HEK293 (cell line): ENCODE measurements at regions of chr9 and their contacts with region 1.

Region 1: DNA sequence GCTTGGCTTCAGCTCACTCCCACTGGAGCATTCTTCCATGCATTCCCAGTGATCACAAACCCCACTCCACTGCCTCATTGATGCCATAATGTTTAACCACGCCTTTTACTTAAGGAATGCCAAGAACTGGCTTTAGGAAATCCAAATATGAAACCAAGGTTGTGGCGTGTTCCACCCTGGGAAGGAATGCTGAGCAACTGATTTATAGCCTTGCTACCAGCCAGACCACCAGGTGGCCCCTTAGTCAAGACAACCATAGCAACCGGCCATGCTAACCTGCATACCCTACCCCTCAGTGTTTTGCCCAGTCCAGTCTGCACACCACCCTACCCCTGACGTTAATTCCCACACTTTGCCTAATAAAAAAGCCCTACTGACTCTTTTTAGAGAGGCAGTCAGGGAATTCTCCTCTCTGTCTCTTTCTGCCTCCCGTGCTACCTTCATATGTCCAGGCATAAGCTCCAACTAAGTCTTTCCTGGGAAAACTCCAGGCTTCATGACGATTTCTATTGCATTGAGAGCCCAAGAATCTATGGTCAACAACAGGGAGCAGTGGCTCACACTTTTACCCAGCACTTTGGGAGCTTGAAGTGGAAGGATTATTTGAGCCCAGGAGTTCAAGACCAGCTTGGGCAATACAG is 27.0 kb upstream of the PRRC2B start:
- H3K4me3 ChIP-seq: no peak overlapping the region
- H3K27ac ChIP-seq: no peak overlapping the region
- H3K4me1 ChIP-seq: 0 out of 2 replicates have a peak, but pooled peaks cover 2% of the 10 kb centered on the region
- CTCF ChIP-seq: peak; percentile 75

Region 2: GRCh38 chr9:131258698-131259431 is 108.0 kb before region 1 on chr9:
- CTCF ChIA-PET with region 1: no interaction called
- POLR2A ChIA-PET with region 1: no interaction called
- H3K4me3 ChIP-seq: no peak overlapping the region
- H3K27ac ChIP-seq: no peak overlapping the region
- H3K4me1 ChIP-seq: no peaks in the 10 kb centered on the region
- CTCF ChIP-seq: no peak

Region 3: DNA sequence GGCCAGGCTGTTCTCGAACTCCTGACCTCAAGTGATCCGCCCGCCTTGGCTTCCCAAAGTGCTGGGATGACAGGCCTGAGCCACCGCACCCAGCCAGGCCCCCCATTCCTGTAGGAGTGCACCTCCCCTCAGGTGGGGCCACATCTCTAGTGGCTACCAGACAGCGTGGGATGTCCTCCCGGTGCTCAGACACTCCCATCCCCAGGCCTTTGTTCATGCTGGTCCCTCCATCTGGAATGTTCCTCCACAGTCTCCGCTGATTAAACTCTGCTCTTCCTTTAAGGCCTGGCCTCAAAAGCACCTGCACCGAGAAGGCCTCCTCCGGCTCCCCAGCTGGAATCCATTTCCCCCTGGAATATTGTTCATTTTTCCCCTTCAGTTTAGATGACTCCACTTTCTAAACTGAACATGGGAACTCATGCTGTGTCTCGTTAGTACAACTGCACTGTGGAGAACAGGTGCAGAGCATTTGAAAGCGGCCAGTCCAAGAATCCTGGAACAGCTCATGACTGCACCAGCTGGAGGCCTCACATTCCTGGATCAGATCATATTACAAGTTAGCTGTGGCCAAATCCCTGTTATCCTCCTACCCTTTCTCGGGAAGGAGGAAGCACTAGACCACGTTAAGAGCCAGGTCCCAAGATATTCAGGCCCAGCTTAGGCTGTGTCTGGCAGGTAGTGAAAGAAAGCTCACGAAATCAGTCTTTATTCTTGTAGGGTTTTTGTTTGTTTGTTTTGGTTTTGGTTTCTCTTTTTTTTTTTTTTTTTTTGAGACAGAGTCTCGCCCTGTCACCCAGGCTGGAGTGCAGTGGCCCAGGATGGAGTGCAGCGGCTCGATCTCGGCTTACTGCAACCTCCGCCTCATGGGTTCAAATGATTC is 16.2 kb after region 1 on chr9:
- CTCF ChIA-PET with region 1: interaction called, 22 read pairs
- POLR2A ChIA-PET with region 1: interaction called, 4 read pairs
- H3K4me3 ChIP-seq: no peak overlapping the region
- H3K27ac ChIP-seq: peak overlapping the region; percentile 44; the same call in 1 of the 2 replicates
- H3K4me1 ChIP-seq: peaks cover 3% of the 10 kb centered on the region; the same call in 1 of the 2 replicates
- CTCF ChIP-seq: no peak

Region 4: GRCh38 chr9:131393622-131394463 is 27.0 kb after region 1 on chr9 and contains the start of gene PRRC2B:
- CTCF ChIA-PET with region 1: interaction called, 5 read pairs
- POLR2A ChIA-PET with region 1: interaction called, 39 read pairs
- H3K4me3 ChIP-seq: peak within 1 kb of the TSS; percentile 68
- H3K27ac ChIP-seq: peak within 1 kb of the TSS; percentile 99
- H3K4me1 ChIP-seq: peaks cover 17% of the 10 kb centered on the region
- CTCF ChIP-seq: no peak

Region 5: GRCh38 chr9:131407717-131408195 is 40.9 kb after region 1 on chr9:
- CTCF ChIA-PET with region 1: interaction called, 15 read pairs
- POLR2A ChIA-PET with region 1: interaction called, 4 read pairs
- H3K4me3 ChIP-seq: no peak overlapping the region
- H3K27ac ChIP-seq: peak overlapping the region; percentile 47
- H3K4me1 ChIP-seq: peaks cover 66% of the 10 kb centered on the region
- CTCF ChIP-seq: peak; percentile 62; the same call in 1 of the 2 replicates

Region 6: GRCh38 chr9:131478421-131478868 is 111.6 kb after region 1 on chr9:
- CTCF ChIA-PET with region 1: interaction called, 10 read pairs
- POLR2A ChIA-PET with region 1: interaction called, 3 read pairs
- H3K4me3 ChIP-seq: no peak overlapping the region
- H3K27ac ChIP-seq: no peak overlapping the region
- H3K4me1 ChIP-seq: no peaks in the 10 kb centered on the region
- CTCF ChIP-seq: 0 out of 2 replicates have a peak, but pooled peaks have one; percentile 16